Endothelial cell of umbilical vein (primary cell): ENCODE measurements at regions of chr7 and their contacts with region 1.

Region 1: DNA sequence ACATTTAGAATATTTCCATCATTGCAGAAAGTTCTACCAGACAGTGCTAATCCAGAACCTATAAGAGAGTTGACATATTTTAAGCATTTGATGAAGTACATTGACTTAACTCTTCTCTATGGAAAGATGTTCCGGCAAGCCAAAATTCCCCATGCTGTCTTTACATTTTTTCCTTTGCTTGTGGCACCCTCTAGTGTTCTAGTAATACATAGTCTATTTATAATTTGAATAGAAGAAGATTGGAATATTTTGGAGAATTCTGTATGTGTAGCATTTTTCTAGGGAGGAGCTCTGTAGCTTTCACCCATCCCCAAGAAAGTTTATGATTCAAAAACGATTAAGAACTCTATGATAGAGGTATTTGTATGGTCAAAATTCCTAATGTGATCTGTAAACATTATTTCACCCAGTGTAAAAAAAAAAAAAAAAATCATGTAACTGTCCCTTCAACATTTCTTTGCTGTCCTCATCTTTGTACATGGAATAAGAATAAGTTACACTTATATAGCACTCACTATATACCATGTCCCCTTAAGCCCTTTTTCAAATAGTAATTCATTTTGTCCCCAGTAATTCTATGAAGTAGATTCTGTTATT is 33.2 kb downstream of the NRF1 start:
- DNase-seq: peak; percentile 66
- H3K4me3 ChIP-seq: no peak overlapping the region
- H3K27ac ChIP-seq: no peak overlapping the region
- H3K4me1 ChIP-seq: peaks cover 16% of the 10 kb centered on the region
- H3K27me3 ChIP-seq: no peaks in the 10 kb centered on the region
- CTCF ChIP-seq: peak in 1 of 2 donors; percentile 15
- POLR2A ChIP-seq: no peak

Region 2: GRCh38 chr7:129343099-129343700 is 301.5 kb before region 1 on chr7:
- CTCF ChIA-PET with region 1: interaction called, 42 read pairs
- POLR2A ChIA-PET with region 1: no interaction called
- dilution Hi-C with region 1: no loop called
- intact Hi-C with region 1: no loop called
- DNase-seq: peak; percentile 68
- H3K4me3 ChIP-seq: no peak overlapping the region
- H3K27ac ChIP-seq: no peak overlapping the region
- H3K4me1 ChIP-seq: no peaks in the 10 kb centered on the region
- H3K27me3 ChIP-seq: no peaks in the 10 kb centered on the region
- CTCF ChIP-seq: peak; percentile 48 to 54
- POLR2A ChIP-seq: no peak

Region 3: GRCh38 chr7:129502376-129502776 is 142.4 kb before region 1 on chr7 and contains the start of gene SMKR1:
- CTCF ChIA-PET with region 1: interaction called, 5 read pairs
- POLR2A ChIA-PET with region 1: no interaction called
- dilution Hi-C with region 1: no loop called
- intact Hi-C with region 1: loop called (anchors 5 kb)
- DNase-seq: peak; percentile 43
- H3K4me3 ChIP-seq: peak within 1 kb of the TSS; percentile 25 to 50 (median 45)
- H3K27ac ChIP-seq: no peak within 1 kb of the TSS
- H3K4me1 ChIP-seq: no peaks in the 10 kb centered on the region
- H3K27me3 ChIP-seq: peaks cover 0 to 5% of the 10 kb centered on the region in 2 experiments
- CTCF ChIP-seq: no peak
- POLR2A ChIP-seq: no peak
- total RNA-seq, gene SMKR1: 0.64 TPM in 1 of 2 replicates, not detected in the other

Region 4: GRCh38 chr7:129611246-129612111 is 33.3 kb before region 1 on chr7 and contains the start of gene NRF1:
- CTCF ChIA-PET with region 1: interaction called, 133 read pairs
- POLR2A ChIA-PET with region 1: interaction called, 8 read pairs
- dilution Hi-C with region 1: no loop called
- intact Hi-C with region 1: loop called (anchors 2 kb)
- DNase-seq: peak; percentile 92
- H3K4me3 ChIP-seq: peak within 1 kb of the TSS; percentile 84 to 96 (median 95)
- H3K27ac ChIP-seq: peak within 1 kb of the TSS; percentile 81
- H3K4me1 ChIP-seq: peaks cover 13% of the 10 kb centered on the region
- H3K27me3 ChIP-seq: no peaks in the 10 kb centered on the region
- CTCF ChIP-seq: peak in 1 of 2 donors; percentile 10
- POLR2A ChIP-seq: peak; percentile 87
- total RNA-seq, gene NRF1: 17.4 and 20.3 TPM in 2 replicates

Region 5: GRCh38 chr7:129657363-129657762 is 12.6 kb after region 1 on chr7:
- CTCF ChIA-PET with region 1: interaction called, 12 read pairs
- POLR2A ChIA-PET with region 1: no interaction called
- dilution Hi-C with region 1: no loop called
- intact Hi-C with region 1: no loop called
- DNase-seq: no peak
- H3K4me3 ChIP-seq: no peak overlapping the region
- H3K27ac ChIP-seq: no peak overlapping the region
- H3K4me1 ChIP-seq: no peaks in the 10 kb centered on the region
- H3K27me3 ChIP-seq: no peaks in the 10 kb centered on the region
- CTCF ChIP-seq: no peak
- POLR2A ChIP-seq: no peak